ENCODE measurements at regions of chr3 and their contacts with region 1.

Region 1: GRCh38 chr3:171132873-171133272 is 106.4 kb upstream of the SLC2A2 start:
- DNase-seq: peak; percentile 41
- H3K27ac ChIP-seq: no peak overlapping the region
- CTCF ChIP-seq: no peak

Region 2: DNA sequence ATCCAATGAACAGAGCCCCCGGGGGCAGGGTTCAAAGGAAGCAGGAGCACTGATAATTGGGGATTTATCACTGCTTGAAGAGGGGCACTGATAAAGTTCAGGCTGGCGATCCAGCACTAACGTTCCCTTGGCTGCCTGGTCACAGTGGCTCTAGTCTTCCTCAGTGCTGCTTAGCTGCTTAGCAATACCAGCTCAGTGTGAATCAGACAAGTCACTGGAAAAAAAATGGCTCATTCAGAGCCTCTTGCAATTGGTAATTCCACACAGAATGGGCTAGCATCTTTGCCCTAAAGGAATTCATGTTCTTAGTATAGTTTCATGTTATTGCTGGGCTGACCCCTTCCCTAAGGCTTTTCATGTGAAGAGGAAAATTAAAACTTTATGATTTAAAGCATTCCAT is 10.6 kb before region 1 on chr3:
- CTCF ChIA-PET with region 1: no interaction called
- POLR2A ChIA-PET with region 1: interaction called, 12 read pairs
- DNase-seq: no peak
- H3K27ac ChIP-seq: no peak overlapping the region
- CTCF ChIP-seq: no peak

Region 3: DNA sequence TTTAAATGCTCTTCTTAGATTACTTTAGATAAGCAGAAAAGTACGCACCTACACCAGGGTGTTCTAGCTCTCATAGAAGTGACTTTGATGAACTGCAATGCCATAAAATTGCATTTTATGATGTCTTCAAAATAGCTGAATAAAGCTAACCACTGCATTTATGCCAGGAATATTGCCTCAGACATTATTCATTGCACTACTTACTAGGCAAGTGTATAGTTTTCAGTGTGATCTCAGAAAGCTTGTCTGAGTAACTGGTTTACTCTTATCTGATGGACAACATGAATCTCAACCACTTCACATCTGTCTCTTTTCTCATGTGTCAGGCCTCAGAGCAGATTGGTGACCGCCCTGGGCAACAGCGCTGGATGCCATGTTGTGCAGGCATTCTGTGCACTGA is 12.9 kb after region 1 on chr3:
- CTCF ChIA-PET with region 1: no interaction called
- POLR2A ChIA-PET with region 1: no interaction called
- DNase-seq: no peak
- H3K27ac ChIP-seq: no peak overlapping the region
- CTCF ChIP-seq: no peak

Measured in RWPE1 (cell line).